ENCODE measurements at regions of chr11 and their contacts with region 1.

Region 1: GRCh38 chr11:61129639-61130523 is 27.6 kb downstream of the CD5 start:
- DNase-seq: peak; percentile 91 to 99
- ATAC-seq: peak; percentile 82 to 98
- H3K4me3 ChIP-seq: no peak overlapping the region
- H3K27ac ChIP-seq: peak overlapping the region; percentile 13 to 75; a peak in 3 of 6 replicates
- H3K4me1 ChIP-seq: 0 out of 3 replicates have a peak, but pooled peaks cover 4% of the 10 kb centered on the region
- CTCF ChIP-seq: peak; percentile 99
- EP300 ChIP-seq: no peak
- POLR2A ChIP-seq: no peak
- RAD21 ChIP-seq: peak; percentile 90 to 91

Region 2: GRCh38 chr11:60913793-60914632 is 215.9 kb before region 1 on chr11 and contains the start of gene TMEM109:
- CTCF ChIA-PET with region 1: interaction called, 25 read pairs
- POLR2A ChIA-PET with region 1: no interaction called
- DNase-seq: peak; percentile 87 to 94
- ATAC-seq: peak; percentile 79 to 89
- H3K4me3 ChIP-seq: peak within 1 kb of the TSS; percentile 76
- H3K27ac ChIP-seq: peak within 1 kb of the TSS; percentile 91 to 94
- H3K4me1 ChIP-seq: peaks cover 21% of the 10 kb centered on the region
- CTCF ChIP-seq: no peak
- EP300 ChIP-seq: no peak
- POLR2A ChIP-seq: peak; percentile 71
- RAD21 ChIP-seq: no peak
- polyA plus RNA-seq, gene TMEM109: 40.9 and 58.0 TPM in 2 replicates

Region 3: DNA sequence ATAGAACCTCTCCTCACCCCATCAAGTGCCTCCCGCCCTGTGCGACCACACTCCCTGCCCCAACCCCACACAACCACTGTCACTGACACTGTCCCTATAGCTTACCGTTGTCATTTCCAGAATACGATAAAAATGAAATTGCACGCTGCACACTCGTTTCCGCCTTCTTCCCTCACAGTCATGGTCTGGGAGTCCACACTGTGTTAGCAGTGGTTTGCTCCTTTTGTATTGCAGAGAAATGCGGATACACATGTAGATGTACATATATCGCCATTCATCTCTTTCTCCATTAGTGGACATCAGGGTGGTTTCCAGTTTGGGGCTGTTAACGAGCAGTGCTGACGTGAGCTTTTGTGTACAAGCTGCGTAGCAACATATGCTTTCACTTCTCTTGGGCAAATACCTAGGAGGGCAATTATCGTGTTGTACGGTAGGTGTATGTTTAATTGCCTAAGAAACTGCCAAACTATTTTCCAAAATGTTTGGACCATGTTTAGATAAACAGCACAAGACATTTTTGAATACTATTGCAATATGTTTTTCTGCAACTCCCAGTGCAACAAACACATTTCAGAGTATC is 86.8 kb before region 1 on chr11:
- CTCF ChIA-PET with region 1: interaction called, 10 read pairs
- POLR2A ChIA-PET with region 1: no interaction called
- DNase-seq: no peak
- ATAC-seq: no peak
- H3K4me3 ChIP-seq: no peak overlapping the region
- H3K27ac ChIP-seq: no peak overlapping the region
- H3K4me1 ChIP-seq: no peaks in the 10 kb centered on the region
- CTCF ChIP-seq: no peak
- EP300 ChIP-seq: no peak
- POLR2A ChIP-seq: no peak
- RAD21 ChIP-seq: no peak

Region 4: GRCh38 chr11:61111786-61112517 is 17.9 kb before region 1 on chr11:
- CTCF ChIA-PET with region 1: interaction called, 24 read pairs
- POLR2A ChIA-PET with region 1: no interaction called
- DNase-seq: no peak
- ATAC-seq: no peak
- H3K4me3 ChIP-seq: no peak overlapping the region
- H3K27ac ChIP-seq: no peak overlapping the region
- H3K4me1 ChIP-seq: no peaks in the 10 kb centered on the region
- CTCF ChIP-seq: no peak
- EP300 ChIP-seq: no peak
- POLR2A ChIP-seq: no peak
- RAD21 ChIP-seq: no peak

Region 5: GRCh38 chr11:61173456-61173855 is 43.6 kb after region 1 on chr11:
- CTCF ChIA-PET with region 1: interaction called, 10 read pairs
- POLR2A ChIA-PET with region 1: no interaction called
- DNase-seq: peak in 1 of 2 experiments; percentile 49
- ATAC-seq: peak; percentile 44 to 80; a peak in 4 of 6 replicates
- H3K4me3 ChIP-seq: no peak overlapping the region
- H3K27ac ChIP-seq: no peak overlapping the region
- H3K4me1 ChIP-seq: no peaks in the 10 kb centered on the region
- CTCF ChIP-seq: peak; percentile 27; the same call in 1 of the 3 replicates
- EP300 ChIP-seq: no peak
- POLR2A ChIP-seq: no peak
- RAD21 ChIP-seq: peak; percentile 50 to 59; a peak in 4 of 5 replicates

Region 6: DNA sequence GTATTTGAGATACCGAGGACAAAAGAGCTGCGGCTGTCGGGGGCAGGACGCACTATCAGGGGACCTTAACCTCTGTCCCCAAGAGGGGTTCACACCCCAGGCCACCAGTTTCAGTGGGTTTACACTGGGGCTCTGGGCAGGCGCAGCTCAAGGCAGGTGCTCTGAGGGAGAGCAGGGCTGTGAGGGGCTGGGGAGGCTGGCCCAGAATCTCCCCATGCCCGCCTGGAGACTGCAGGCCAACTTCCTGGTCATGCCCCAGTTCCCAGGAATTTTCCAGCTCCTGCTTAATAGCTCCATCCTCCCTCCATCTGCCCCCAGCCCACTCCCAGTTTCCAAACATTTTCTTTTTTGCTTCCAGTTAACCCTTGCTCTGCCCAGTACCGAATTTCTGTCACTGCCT is 65.8 kb after region 1 on chr11:
- CTCF ChIA-PET with region 1: no interaction called
- POLR2A ChIA-PET with region 1: no interaction called
- DNase-seq: no peak
- ATAC-seq: peak; percentile 32 to 42; a peak in 3 of 6 replicates
- H3K4me3 ChIP-seq: no peak overlapping the region
- H3K27ac ChIP-seq: no peak overlapping the region
- H3K4me1 ChIP-seq: no peaks in the 10 kb centered on the region
- CTCF ChIP-seq: no peak
- EP300 ChIP-seq: no peak
- POLR2A ChIP-seq: no peak
- RAD21 ChIP-seq: no peak

Measured in A549 (cell line).